ENCODE measurements at regions of chr5 and their contacts with region 1.

Region 1: DNA sequence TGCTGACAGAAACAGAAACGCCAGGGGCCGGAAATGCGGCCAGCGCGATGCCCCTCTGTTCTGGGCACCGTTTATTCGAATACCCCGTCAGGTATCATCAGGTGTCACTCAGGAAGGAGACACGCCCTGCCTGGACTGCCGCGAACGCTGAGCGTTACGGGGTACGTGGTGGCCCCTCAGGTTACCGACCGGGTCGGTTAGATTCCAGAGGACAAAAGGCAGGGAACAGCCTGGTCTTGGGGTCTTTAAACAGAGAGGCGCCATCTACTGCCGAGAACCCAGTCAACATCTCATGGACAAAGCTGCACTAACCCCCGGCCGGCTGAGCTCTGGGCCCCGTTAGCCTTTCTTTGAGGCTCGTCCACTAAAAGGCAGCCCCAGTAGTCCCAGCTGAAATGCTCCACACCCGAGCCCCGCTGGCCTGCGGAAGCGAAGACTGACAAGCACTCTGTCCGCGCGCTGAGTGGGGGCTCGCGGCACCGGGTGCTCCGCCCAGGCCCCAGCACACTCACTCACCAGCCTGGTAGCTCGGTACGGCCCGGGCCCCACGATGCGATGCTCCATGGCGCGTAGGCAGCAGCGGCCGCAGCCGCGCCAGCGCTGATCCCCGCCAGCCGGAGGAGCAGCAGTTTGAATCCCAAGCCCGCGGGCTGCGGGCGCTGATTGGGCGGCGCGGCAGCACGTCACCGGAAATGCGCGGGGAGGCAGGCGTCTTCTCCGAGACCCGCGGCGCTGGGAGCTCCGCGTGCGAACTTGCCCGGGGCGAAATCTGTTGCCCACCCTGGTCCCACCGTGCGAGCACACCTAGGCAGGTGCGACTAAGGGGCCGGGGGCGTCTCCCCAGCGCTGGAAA is at the start of gene DEPDC1B:
- DNase-seq: peak; percentile 88
- ATAC-seq: peak; percentile 97
- H3K4me3 ChIP-seq: peak within 1 kb of the TSS; percentile 87
- H3K27ac ChIP-seq: peak within 1 kb of the TSS; percentile 79
- H3K4me1 ChIP-seq: no peaks in the 10 kb centered on the region
- H3K27me3 ChIP-seq: peaks cover 4% of the 10 kb centered on the region; the same call in 1 of the 2 replicates
- CTCF ChIP-seq: peak; percentile 46
- POLR2A ChIP-seq: peak; percentile 68
- RAD21 ChIP-seq: peak; percentile 23; the same call in 1 of the 2 replicates
- total RNA-seq, gene DEPDC1B: 9.3 and 10.0 TPM in 2 replicates

Region 2: GRCh38 chr5:59863777-59864176 is 836.0 kb before region 1 on chr5:
- CTCF ChIA-PET with region 1: no interaction called
- POLR2A ChIA-PET with region 1: no interaction called
- dilution Hi-C with region 1: no loop called
- in situ Hi-C with region 1: no loop called
- intact Hi-C with region 1: no loop called
- DNase-seq: peak; percentile 27
- ATAC-seq: peak; percentile 66
- H3K4me3 ChIP-seq: no peak overlapping the region
- H3K27ac ChIP-seq: no peak overlapping the region
- H3K4me1 ChIP-seq: no peaks in the 10 kb centered on the region
- H3K27me3 ChIP-seq: no peaks in the 10 kb centered on the region
- CTCF ChIP-seq: no peak
- POLR2A ChIP-seq: no peak
- RAD21 ChIP-seq: no peak

Region 3: GRCh38 chr5:60677844-60678664 is 21.7 kb before region 1 on chr5:
- CTCF ChIA-PET with region 1: interaction called, 4 read pairs
- POLR2A ChIA-PET with region 1: interaction called, 3 read pairs
- dilution Hi-C with region 1: no loop called
- in situ Hi-C with region 1: no loop called
- intact Hi-C with region 1: loop called (anchors 2 kb)
- DNase-seq: peak; percentile 58
- ATAC-seq: peak; percentile 68
- H3K4me3 ChIP-seq: no peak overlapping the region
- H3K27ac ChIP-seq: peak overlapping the region; percentile 29; the same call in 1 of the 2 replicates
- H3K4me1 ChIP-seq: peaks cover 6% of the 10 kb centered on the region; the same call in 1 of the 2 replicates
- H3K27me3 ChIP-seq: no peaks in the 10 kb centered on the region
- CTCF ChIP-seq: peak; percentile 63
- POLR2A ChIP-seq: no peak
- RAD21 ChIP-seq: peak; percentile 52

Region 4: GRCh38 chr5:60687927-60688720 is 11.6 kb before region 1 on chr5:
- CTCF ChIA-PET with region 1: interaction called, 10 read pairs
- POLR2A ChIA-PET with region 1: no interaction called
- dilution Hi-C with region 1: no loop called
- in situ Hi-C with region 1: no loop called
- intact Hi-C with region 1: no loop called
- DNase-seq: peak; percentile 75
- ATAC-seq: peak; percentile 97
- H3K4me3 ChIP-seq: no peak overlapping the region
- H3K27ac ChIP-seq: no peak overlapping the region
- H3K4me1 ChIP-seq: no peaks in the 10 kb centered on the region
- H3K27me3 ChIP-seq: no peaks in the 10 kb centered on the region
- CTCF ChIP-seq: peak; percentile 40
- POLR2A ChIP-seq: no peak
- RAD21 ChIP-seq: no peak

Region 5: DNA sequence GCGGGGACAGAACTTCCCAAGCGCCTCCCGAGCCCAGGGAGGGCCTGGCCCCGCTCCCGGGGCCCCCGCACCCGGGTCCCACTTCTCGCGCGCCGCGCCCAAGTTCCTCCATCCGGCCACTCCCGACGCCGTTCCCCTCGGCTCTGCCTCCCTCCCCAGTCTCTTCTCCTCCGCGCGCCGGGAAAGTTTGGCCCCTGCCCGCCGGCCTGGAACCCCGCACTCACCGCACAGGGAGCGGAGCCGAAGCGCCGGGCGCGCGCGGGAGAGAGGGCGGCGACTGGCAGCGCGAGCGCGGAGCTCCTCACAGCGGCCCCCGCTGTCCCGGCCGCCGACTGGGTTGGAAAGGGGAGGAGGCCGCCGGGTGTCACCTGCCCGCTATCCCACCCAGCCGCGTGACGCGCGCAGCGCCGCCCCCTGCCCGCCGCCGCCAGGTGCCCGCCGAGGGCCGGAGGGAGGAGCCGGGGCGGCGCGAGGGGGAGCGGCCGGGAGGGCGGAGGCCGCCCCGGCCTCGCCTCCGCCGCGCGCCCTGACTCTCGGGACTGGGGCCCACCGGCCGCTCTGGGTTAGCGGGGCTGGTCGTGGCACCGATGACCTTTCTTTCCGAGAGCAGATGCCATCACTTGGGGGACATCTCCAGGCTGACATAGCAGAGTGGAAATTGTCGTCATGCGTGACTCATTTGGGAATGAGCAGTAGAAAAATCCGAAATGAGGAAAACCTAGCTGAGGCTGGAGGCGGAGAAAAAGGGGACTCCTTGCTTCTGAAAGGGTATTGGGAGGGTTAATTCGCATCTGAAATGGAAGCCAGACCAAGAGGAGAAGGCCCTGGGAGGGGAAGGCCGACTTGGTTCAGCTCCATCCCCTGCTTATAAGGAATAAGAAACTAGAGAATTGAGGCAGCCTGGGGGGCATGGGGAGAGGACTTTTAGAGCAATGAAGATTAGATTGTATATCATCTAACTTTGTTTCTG is 144.5 kb after region 1 on chr5 and contains the start of gene ELOVL7:
- CTCF ChIA-PET with region 1: no interaction called
- POLR2A ChIA-PET with region 1: no interaction called
- dilution Hi-C with region 1: no loop called
- in situ Hi-C with region 1: no loop called
- intact Hi-C with region 1: loop called (anchors 10 kb)
- DNase-seq: peak; percentile 29
- ATAC-seq: peak; percentile 93
- H3K4me3 ChIP-seq: peak within 1 kb of the TSS; percentile 79
- H3K27ac ChIP-seq: no peak within 1 kb of the TSS
- H3K4me1 ChIP-seq: no peaks in the 10 kb centered on the region; the same call in 1 of the 2 replicates
- H3K27me3 ChIP-seq: peaks cover 49% of the 10 kb centered on the region
- CTCF ChIP-seq: 0 out of 2 replicates have a peak, but pooled peaks have one; percentile 27
- POLR2A ChIP-seq: no peak
- RAD21 ChIP-seq: no peak
- total RNA-seq, gene ELOVL7: 0.18 TPM in 1 of 2 replicates, not detected in the other

Region 6: GRCh38 chr5:60944904-60945812 is 245.4 kb after region 1 on chr5 and contains the starts of genes ERCC8 and NDUFAF2:
- CTCF ChIA-PET with region 1: no interaction called
- POLR2A ChIA-PET with region 1: no interaction called
- dilution Hi-C with region 1: no loop called
- in situ Hi-C with region 1: loop called (anchors 10 kb)
- intact Hi-C with region 1: loop called (anchors 5 kb)
- DNase-seq: peak; percentile 92
- ATAC-seq: peak; percentile 97
- H3K4me3 ChIP-seq: peak within 1 kb of the TSS; percentile 88
- H3K27ac ChIP-seq: peak within 1 kb of the TSS; percentile 50
- H3K4me1 ChIP-seq: no peaks in the 10 kb centered on the region
- H3K27me3 ChIP-seq: no peaks in the 10 kb centered on the region
- CTCF ChIP-seq: no peak
- POLR2A ChIP-seq: peak; percentile 65; the same call in 1 of the 2 replicates
- RAD21 ChIP-seq: no peak
- total RNA-seq, gene ERCC8: 29.2 and 36.7 TPM in 2 replicates
- total RNA-seq, gene NDUFAF2: 11.8 and 34.2 TPM in 2 replicates

Region 7: GRCh38 chr5:61162010-61162831 is 462.5 kb after region 1 on chr5 and contains the start of gene SMIM15:
- CTCF ChIA-PET with region 1: no interaction called
- POLR2A ChIA-PET with region 1: no interaction called
- dilution Hi-C with region 1: no loop called
- in situ Hi-C with region 1: loop called (anchors 25 kb)
- intact Hi-C with region 1: no loop called
- DNase-seq: peak; percentile 87
- ATAC-seq: peak; percentile 95
- H3K4me3 ChIP-seq: peak within 1 kb of the TSS; percentile 94
- H3K27ac ChIP-seq: peak within 1 kb of the TSS; percentile 95
- H3K4me1 ChIP-seq: peaks cover 5% of the 10 kb centered on the region
- H3K27me3 ChIP-seq: no peaks in the 10 kb centered on the region
- CTCF ChIP-seq: no peak
- POLR2A ChIP-seq: peak; percentile 70
- RAD21 ChIP-seq: 0 out of 2 replicates have a peak, but pooled peaks have one; percentile 3
- total RNA-seq, gene SMIM15: 94.3 and 101 TPM in 2 replicates

Region 8: GRCh38 chr5:61319388-61320146 is 619.8 kb after region 1 on chr5:
- CTCF ChIA-PET with region 1: no interaction called
- POLR2A ChIA-PET with region 1: no interaction called
- dilution Hi-C with region 1: no loop called
- in situ Hi-C with region 1: loop called (anchors 25 kb)
- intact Hi-C with region 1: no loop called
- DNase-seq: no peak
- ATAC-seq: no peak
- H3K4me3 ChIP-seq: no peak overlapping the region
- H3K27ac ChIP-seq: no peak overlapping the region
- H3K4me1 ChIP-seq: peaks cover 9% of the 10 kb centered on the region
- H3K27me3 ChIP-seq: no peaks in the 10 kb centered on the region
- CTCF ChIP-seq: no peak
- POLR2A ChIP-seq: no peak
- RAD21 ChIP-seq: no peak

Measured in IMR-90 (cell line).